ENCODE measurements at regions of chr1 and their contacts with region 1.

Region 1: GRCh38 chr1:209354111-209354839 is 229.2 kb upstream of the CAMK1G start:
- DNase-seq: no peak
- ATAC-seq: peak; percentile 97
- H3K4me3 ChIP-seq: no peak overlapping the region
- H3K27ac ChIP-seq: no peak overlapping the region
- H3K4me1 ChIP-seq: no peaks in the 10 kb centered on the region
- H3K27me3 ChIP-seq: no peaks in the 10 kb centered on the region; a peak in 1 of 4 replicates
- CTCF ChIP-seq: peak; percentile 81 to 90 (median 81)
- EP300 ChIP-seq: no peak
- POLR2A ChIP-seq: no peak
- RAD21 ChIP-seq: peak; percentile 64

Region 2: GRCh38 chr1:209010475-209011230 is 343.6 kb before region 1 on chr1:
- CTCF ChIA-PET with region 1: no interaction called
- POLR2A ChIA-PET with region 1: no interaction called
- RAD21 ChIA-PET with region 1: no interaction called
- SMC1A ChIA-PET with region 1: no interaction called
- in situ Hi-C with region 1: no loop called
- intact Hi-C with region 1: no loop called
- DNase-seq: no peak
- ATAC-seq: no peak
- H3K4me3 ChIP-seq: no peak overlapping the region
- H3K27ac ChIP-seq: no peak overlapping the region
- H3K4me1 ChIP-seq: no peaks in the 10 kb centered on the region
- H3K27me3 ChIP-seq: no peaks in the 10 kb centered on the region
- CTCF ChIP-seq: no peak
- EP300 ChIP-seq: no peak
- POLR2A ChIP-seq: no peak
- RAD21 ChIP-seq: no peak

Region 3: DNA sequence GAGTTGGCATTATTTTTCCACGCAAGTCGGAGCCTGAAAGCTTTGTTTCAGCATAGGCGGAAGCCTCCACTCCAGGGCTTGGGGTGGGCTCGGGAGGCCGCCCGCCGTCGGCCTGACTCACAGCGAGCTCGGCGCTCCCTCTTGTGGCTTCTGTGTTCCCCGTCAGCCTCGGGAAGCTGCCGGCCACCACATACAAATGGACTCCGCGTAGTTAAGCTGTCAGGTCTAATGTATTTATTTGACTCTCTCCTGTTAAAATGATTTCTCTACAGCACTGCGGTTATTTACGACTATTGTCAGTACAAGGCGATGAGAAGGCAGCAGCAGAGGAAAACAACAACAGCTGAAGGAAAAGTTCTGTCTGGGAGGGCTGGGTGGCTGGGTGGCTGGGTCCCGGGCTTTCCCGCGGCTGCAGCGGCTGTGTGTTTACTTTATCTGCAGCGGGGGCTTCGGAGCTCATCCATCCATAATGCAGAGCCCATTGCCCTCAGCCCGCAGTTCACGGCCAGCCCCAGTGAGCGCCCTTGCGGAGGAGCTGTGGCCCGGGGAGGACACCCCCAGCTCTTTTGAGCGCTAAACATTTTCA is 146.5 kb before region 1 on chr1:
- CTCF ChIA-PET with region 1: interaction called, 7 read pairs
- POLR2A ChIA-PET with region 1: no interaction called
- RAD21 ChIA-PET with region 1: no interaction called
- SMC1A ChIA-PET with region 1: no interaction called
- in situ Hi-C with region 1: no loop called
- intact Hi-C with region 1: loop called (anchors 2 kb)
- DNase-seq: no peak
- ATAC-seq: peak; percentile 81
- H3K4me3 ChIP-seq: no peak overlapping the region
- H3K27ac ChIP-seq: no peak overlapping the region
- H3K4me1 ChIP-seq: no peaks in the 10 kb centered on the region
- H3K27me3 ChIP-seq: peaks cover 4 to 6% of the 10 kb centered on the region in 2 experiments; a peak in 3 of 4 replicates
- CTCF ChIP-seq: peak; percentile 51 to 74 (median 61); a peak in 5 of 6 replicates
- EP300 ChIP-seq: no peak
- POLR2A ChIP-seq: no peak
- RAD21 ChIP-seq: peak; percentile 84

Region 4: GRCh38 chr1:209248649-209249279 is 105.5 kb before region 1 on chr1:
- CTCF ChIA-PET with region 1: interaction called, 5 read pairs
- POLR2A ChIA-PET with region 1: no interaction called
- RAD21 ChIA-PET with region 1: interaction called, 3 read pairs
- SMC1A ChIA-PET with region 1: interaction called, 4 read pairs
- in situ Hi-C with region 1: no loop called
- intact Hi-C with region 1: loop called (anchors 1 kb)
- DNase-seq: peak; percentile 30
- ATAC-seq: peak; percentile 91
- H3K4me3 ChIP-seq: no peak overlapping the region
- H3K27ac ChIP-seq: no peak overlapping the region
- H3K4me1 ChIP-seq: no peaks in the 10 kb centered on the region
- H3K27me3 ChIP-seq: no peaks in the 10 kb centered on the region; a peak in 1 of 4 replicates
- CTCF ChIP-seq: peak; percentile 81 to 93 (median 85); a peak in 5 of 6 replicates
- EP300 ChIP-seq: no peak
- POLR2A ChIP-seq: no peak
- RAD21 ChIP-seq: peak; percentile 90

Region 5: DNA sequence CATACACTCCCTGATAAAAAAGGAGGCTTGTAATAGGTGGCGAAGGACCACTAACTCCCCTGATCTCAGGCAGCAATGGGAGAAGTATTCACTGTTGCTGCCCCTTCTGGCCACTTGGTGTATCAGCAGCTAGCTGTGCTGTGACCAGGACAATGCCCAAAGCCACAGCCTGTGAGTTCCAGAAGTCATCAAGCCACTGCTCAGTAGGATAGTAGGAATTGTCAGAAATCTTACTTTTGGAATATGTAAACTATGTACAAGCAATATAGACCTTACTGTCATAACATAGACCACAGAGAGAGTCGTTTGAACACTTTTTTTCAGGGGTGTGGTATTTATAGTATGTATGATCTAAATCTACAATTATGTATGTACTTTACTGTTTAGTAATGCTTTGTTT is 19.1 kb before region 1 on chr1:
- CTCF ChIA-PET with region 1: interaction called, 14 read pairs
- POLR2A ChIA-PET with region 1: no interaction called
- RAD21 ChIA-PET with region 1: no interaction called
- SMC1A ChIA-PET with region 1: interaction called, 5 read pairs
- in situ Hi-C with region 1: no loop called
- intact Hi-C with region 1: no loop called
- DNase-seq: no peak
- ATAC-seq: peak; percentile 90
- H3K4me3 ChIP-seq: no peak overlapping the region
- H3K27ac ChIP-seq: no peak overlapping the region
- H3K4me1 ChIP-seq: no peaks in the 10 kb centered on the region
- H3K27me3 ChIP-seq: peaks cover 0 to 2% of the 10 kb centered on the region in 2 experiments; a peak in 1 of 4 replicates
- CTCF ChIP-seq: peak; percentile 58 to 82 (median 80)
- EP300 ChIP-seq: no peak
- POLR2A ChIP-seq: no peak
- RAD21 ChIP-seq: no peak

Region 6: GRCh38 chr1:209342441-209343175 is 11.7 kb before region 1 on chr1:
- CTCF ChIA-PET with region 1: interaction called, 20 read pairs
- POLR2A ChIA-PET with region 1: no interaction called
- RAD21 ChIA-PET with region 1: no interaction called
- SMC1A ChIA-PET with region 1: interaction called, 5 read pairs
- in situ Hi-C with region 1: no loop called
- intact Hi-C with region 1: no loop called
- DNase-seq: no peak
- ATAC-seq: no peak
- H3K4me3 ChIP-seq: no peak overlapping the region
- H3K27ac ChIP-seq: no peak overlapping the region
- H3K4me1 ChIP-seq: no peaks in the 10 kb centered on the region
- H3K27me3 ChIP-seq: 0 out of 4 replicates have a peak, but pooled peaks cover 0 to 5% of the 10 kb centered on the region in 2 experiments
- CTCF ChIP-seq: no peak
- EP300 ChIP-seq: no peak
- POLR2A ChIP-seq: no peak
- RAD21 ChIP-seq: no peak

Region 7: DNA sequence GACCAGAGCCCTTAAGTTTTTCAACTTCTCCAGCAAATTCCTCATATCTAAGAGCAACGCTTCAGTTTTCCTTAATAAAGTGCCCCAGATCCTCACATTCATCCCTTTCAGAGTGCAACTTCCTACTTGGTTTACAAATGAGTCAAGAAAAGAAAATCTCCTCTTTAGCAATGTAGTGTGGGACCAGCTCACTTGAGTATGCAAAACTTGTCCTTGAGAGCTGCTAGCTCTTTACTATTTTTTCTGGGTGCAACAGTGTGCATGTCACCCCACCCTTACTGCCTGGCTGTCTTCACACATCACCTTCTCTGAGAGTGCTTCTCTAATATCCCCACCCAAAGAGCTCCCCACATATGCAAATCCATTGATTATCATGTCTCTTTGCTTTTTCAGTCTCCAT is 26.1 kb after region 1 on chr1:
- CTCF ChIA-PET with region 1: interaction called, 13 read pairs
- POLR2A ChIA-PET with region 1: no interaction called
- RAD21 ChIA-PET with region 1: no interaction called
- SMC1A ChIA-PET with region 1: interaction called, 5 read pairs
- in situ Hi-C with region 1: no loop called
- intact Hi-C with region 1: no loop called
- DNase-seq: no peak
- ATAC-seq: no peak
- H3K4me3 ChIP-seq: no peak overlapping the region
- H3K27ac ChIP-seq: no peak overlapping the region
- H3K4me1 ChIP-seq: no peaks in the 10 kb centered on the region
- H3K27me3 ChIP-seq: peaks cover 0 to 2% of the 10 kb centered on the region in 2 experiments; a peak in 2 of 4 replicates
- CTCF ChIP-seq: no peak
- EP300 ChIP-seq: no peak
- POLR2A ChIP-seq: no peak
- RAD21 ChIP-seq: no peak

Region 8: GRCh38 chr1:209513226-209513625 is 159.0 kb after region 1 on chr1:
- CTCF ChIA-PET with region 1: interaction called, 4 read pairs
- POLR2A ChIA-PET with region 1: no interaction called
- RAD21 ChIA-PET with region 1: interaction called, 5 read pairs
- SMC1A ChIA-PET with region 1: interaction called, 3 read pairs
- in situ Hi-C with region 1: no loop called
- intact Hi-C with region 1: loop called (anchors 5 kb)
- DNase-seq: no peak
- ATAC-seq: peak; percentile 85
- H3K4me3 ChIP-seq: no peak overlapping the region
- H3K27ac ChIP-seq: no peak overlapping the region
- H3K4me1 ChIP-seq: no peaks in the 10 kb centered on the region
- H3K27me3 ChIP-seq: no peaks in the 10 kb centered on the region
- CTCF ChIP-seq: peak; percentile 59 to 68 (median 62); a peak in 5 of 6 replicates
- EP300 ChIP-seq: no peak
- POLR2A ChIP-seq: no peak
- RAD21 ChIP-seq: peak; percentile 50